ENCODE measurements at regions of chr5 and their contacts with region 1.

Region 1: GRCh38 chr5:140073296-140073695 is 30.2 kb upstream of the NRG2 start:
- DNase-seq: no peak
- H3K4me3 ChIP-seq: no peak overlapping the region
- H3K27ac ChIP-seq: no peak overlapping the region
- H3K4me1 ChIP-seq: peaks cover 0 to 7% (median 0%) of the 10 kb centered on the region in 4 donors
- H3K27me3 ChIP-seq: no peaks in the 10 kb centered on the region
- CTCF ChIP-seq: peak; percentile 55 to 71 (median 64)
- EP300 ChIP-seq: no peak
- POLR2A ChIP-seq: no peak

Region 2: GRCh38 chr5:139949710-139950109 is 123.6 kb before region 1 on chr5:
- intact Hi-C with region 1: no loop called
- DNase-seq: no peak
- H3K4me3 ChIP-seq: no peak overlapping the region
- H3K27ac ChIP-seq: no peak overlapping the region
- H3K4me1 ChIP-seq: peaks cover 6 to 18% (median 12%) of the 10 kb centered on the region in 4 donors
- H3K27me3 ChIP-seq: no peaks in the 10 kb centered on the region
- CTCF ChIP-seq: no peak
- EP300 ChIP-seq: no peak
- POLR2A ChIP-seq: no peak

Region 3: GRCh38 chr5:140157032-140157803 is 83.9 kb after region 1 on chr5:
- intact Hi-C with region 1: loop called (anchors 1 kb)
- DNase-seq: peak; percentile 97
- H3K4me3 ChIP-seq: peak overlapping the region; percentile 46 to 60 (median 49)
- H3K27ac ChIP-seq: peak overlapping the region; percentile 10 to 67 (median 50)
- H3K4me1 ChIP-seq: peaks cover 11 to 31% (median 20%) of the 10 kb centered on the region in 4 donors
- H3K27me3 ChIP-seq: no peaks in the 10 kb centered on the region
- CTCF ChIP-seq: peak; percentile 93 to 98 (median 94)
- EP300 ChIP-seq: no peak
- POLR2A ChIP-seq: no peak

Measured in esophagus muscularis mucosa (tissue), 4 donors.